ENCODE measurements at regions of chr10 and their contacts with region 1.

Region 1: GRCh38 chr10:102904346-102904745 is 13.7 kb upstream of the CNNM2 start:
- H3K4me3 ChIP-seq: no peak overlapping the region
- H3K27ac ChIP-seq: no peak overlapping the region
- H3K4me1 ChIP-seq: no peaks in the 10 kb centered on the region
- CTCF ChIP-seq: no peak

Region 2: GRCh38 chr10:102731222-102731800 is 173.0 kb before region 1 on chr10:
- CTCF ChIA-PET with region 1: interaction called, 15 read pairs
- POLR2A ChIA-PET with region 1: no interaction called
- H3K4me3 ChIP-seq: no peak overlapping the region
- H3K27ac ChIP-seq: no peak overlapping the region
- H3K4me1 ChIP-seq: no peaks in the 10 kb centered on the region
- CTCF ChIP-seq: no peak

Region 3: GRCh38 chr10:102799691-102800474 is 104.5 kb before region 1 on chr10:
- CTCF ChIA-PET with region 1: no interaction called
- POLR2A ChIA-PET with region 1: no interaction called
- H3K4me3 ChIP-seq: no peak overlapping the region
- H3K27ac ChIP-seq: no peak overlapping the region
- H3K4me1 ChIP-seq: peaks cover 2% of the 10 kb centered on the region; the same call in 1 of the 2 replicates
- CTCF ChIP-seq: no peak

Region 4: DNA sequence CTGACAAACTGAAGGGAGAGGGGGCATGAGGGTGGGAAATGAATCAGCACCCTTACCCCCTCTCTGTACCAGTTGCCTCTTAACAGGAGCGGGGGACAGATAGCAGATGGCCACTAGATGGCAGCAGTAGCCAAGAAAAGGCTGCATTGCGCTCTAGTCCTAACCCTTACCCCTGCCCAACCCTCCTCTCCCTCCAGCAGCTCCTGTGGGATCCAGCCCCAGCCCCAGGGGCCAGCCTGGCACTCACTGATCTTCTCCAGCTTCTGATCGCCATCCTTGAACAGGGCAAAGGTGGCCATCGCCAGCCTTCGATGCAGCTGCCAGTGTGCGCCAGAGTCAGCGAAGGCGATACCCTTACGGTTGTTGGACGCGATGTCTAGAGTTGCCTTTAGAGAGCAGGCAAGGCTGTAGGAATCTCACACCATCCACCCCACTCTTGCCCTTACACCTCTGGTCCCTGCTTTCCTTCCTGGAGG is 69.3 kb before region 1 on chr10:
- CTCF ChIA-PET with region 1: interaction called, 112 read pairs
- POLR2A ChIA-PET with region 1: no interaction called
- H3K4me3 ChIP-seq: no peak overlapping the region
- H3K27ac ChIP-seq: no peak overlapping the region
- H3K4me1 ChIP-seq: peaks cover 6% of the 10 kb centered on the region; the same call in 1 of the 2 replicates
- CTCF ChIP-seq: peak; percentile 94

Region 5: GRCh38 chr10:102869258-102870198 is 34.8 kb before region 1 on chr10 and contains the start of gene AS3MT:
- CTCF ChIA-PET with region 1: interaction called, 5 read pairs
- POLR2A ChIA-PET with region 1: interaction called, 12 read pairs
- H3K4me3 ChIP-seq: peak within 1 kb of the TSS; percentile 49
- H3K27ac ChIP-seq: 0 out of 2 replicates have a peak within 1 kb of the TSS, but pooled peaks have one; percentile 31
- H3K4me1 ChIP-seq: peaks cover 3% of the 10 kb centered on the region
- CTCF ChIP-seq: no peak

Region 6: DNA sequence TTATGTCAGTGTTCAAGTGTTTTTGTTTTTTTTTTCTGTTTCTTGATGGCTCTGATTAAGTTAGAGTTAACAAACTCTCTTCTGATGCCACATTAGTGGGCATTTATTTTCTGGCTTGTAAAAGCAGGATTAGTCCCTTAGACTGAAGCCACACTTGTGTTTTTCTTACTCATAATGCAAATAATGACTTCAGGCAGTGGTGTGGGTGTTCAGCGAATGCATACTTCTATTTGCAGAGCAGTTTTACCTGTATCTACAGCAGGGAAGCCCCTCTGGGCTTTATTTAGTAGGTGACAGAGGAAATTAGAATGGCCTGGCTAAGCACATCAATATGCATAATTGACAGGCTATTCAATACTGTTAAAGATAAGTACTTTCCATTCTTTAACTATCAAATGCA is 93.7 kb after region 1 on chr10:
- CTCF ChIA-PET with region 1: no interaction called
- POLR2A ChIA-PET with region 1: no interaction called
- H3K4me3 ChIP-seq: no peak overlapping the region
- H3K27ac ChIP-seq: peak overlapping the region; percentile 37
- H3K4me1 ChIP-seq: peaks cover 5% of the 10 kb centered on the region; the same call in 1 of the 2 replicates
- CTCF ChIP-seq: no peak

Region 7: DNA sequence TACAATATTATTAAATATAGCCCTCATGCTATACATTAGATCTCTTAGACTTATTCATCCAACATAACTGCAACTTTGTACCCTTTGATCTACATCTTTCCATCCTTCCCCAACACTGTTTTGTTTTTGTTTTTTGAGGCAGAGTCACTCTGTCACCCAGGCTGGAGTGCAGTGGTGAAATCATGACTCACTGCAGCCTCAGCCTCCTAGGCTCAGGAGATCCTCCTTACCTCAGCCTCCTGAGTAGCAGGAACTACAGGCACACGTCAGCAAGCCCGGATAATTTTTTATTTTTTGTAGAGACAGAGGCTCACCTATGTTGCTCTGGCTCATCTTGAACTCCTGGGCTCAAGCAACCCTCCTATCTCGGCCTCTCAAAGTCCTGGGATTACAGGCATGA is 235.5 kb after region 1 on chr10:
- CTCF ChIA-PET with region 1: no interaction called
- POLR2A ChIA-PET with region 1: no interaction called
- H3K4me3 ChIP-seq: no peak overlapping the region
- H3K27ac ChIP-seq: no peak overlapping the region
- H3K4me1 ChIP-seq: peaks cover 7% of the 10 kb centered on the region
- CTCF ChIP-seq: no peak

Region 8: DNA sequence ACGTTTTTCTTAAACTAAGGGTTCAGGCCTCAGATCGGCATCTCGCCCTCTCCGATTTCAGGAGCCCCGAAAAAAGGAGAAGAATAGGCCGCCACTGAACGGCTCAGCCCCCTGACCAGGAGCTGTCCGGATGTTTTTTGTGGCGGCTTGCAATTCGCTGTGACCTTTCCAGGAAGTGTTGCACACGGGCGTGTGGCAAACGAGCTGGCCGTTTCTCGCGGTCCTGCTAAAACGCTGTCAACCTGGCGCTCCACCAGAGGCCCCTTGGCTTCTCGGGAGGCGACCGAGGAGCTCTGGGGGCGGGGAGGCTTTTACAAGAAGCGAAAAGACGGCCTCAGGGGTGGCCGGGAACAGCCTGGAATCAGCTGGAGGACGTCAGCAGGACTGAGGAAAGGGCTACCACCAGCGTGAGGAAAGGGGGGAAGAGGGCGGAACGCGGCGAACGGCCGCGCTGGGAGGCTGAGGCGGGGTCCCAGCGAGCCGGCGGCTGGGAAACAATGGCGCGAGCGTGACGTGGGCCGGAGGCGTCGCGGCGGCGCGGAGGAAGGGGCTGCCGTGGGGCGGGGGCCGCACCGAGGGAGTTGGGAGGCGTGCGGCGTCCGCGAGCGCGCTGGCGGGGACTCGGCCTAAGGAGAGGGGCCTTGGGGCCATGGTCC is 288.2 kb after region 1 on chr10:
- CTCF ChIA-PET with region 1: no interaction called
- POLR2A ChIA-PET with region 1: no interaction called
- H3K4me3 ChIP-seq: peak overlapping the region; percentile 69
- H3K27ac ChIP-seq: peak overlapping the region; percentile 73
- H3K4me1 ChIP-seq: peaks cover 15% of the 10 kb centered on the region
- CTCF ChIP-seq: no peak

Measured in HEK293 (cell line).